ENCODE measurements at regions of chr3 and their contacts with region 1.

Region 1: DNA sequence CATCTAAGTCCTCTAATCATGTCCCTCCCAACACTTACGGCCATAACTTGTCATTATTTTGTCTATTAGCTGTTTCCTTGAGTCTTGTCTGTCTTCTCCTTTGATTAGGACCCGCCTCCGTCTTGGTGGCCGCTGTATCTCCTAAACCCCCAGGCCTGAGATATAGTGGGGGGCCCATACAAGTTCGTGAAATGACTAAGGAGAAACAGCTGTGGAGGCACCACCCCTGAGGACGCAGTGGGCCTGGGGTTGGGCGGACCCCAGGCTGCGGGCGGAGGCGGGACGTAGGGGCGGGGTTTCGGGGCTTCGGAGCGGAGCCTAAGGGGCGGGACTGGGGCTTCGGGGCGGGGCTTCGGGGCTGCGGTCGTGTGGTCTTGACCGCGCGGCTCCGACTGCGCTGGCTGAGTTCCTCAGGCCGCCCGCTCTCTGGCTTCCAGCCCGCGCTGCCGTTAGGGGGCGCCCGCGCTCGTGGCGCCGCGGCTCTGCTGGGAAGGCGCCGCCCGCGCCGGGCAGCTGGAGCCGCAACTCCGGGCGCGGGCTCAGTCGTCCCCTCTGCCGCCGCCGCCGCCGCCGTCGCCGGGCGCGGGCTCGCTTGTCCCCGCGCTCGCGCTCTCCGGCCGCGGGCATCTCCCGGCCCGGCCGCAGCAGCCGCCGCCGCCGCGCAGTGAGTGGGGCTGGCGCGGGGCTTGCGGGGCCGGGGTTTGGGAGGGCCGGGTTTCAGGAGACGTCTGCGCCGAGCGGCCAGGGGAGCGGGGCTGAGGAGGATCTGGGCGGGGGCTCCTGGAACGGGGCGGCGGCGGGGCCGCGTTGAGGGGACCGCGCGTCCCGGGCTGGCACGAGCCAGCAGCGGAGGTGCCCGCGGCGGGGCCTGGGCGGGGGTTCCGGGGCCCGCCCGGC is at the start of gene KCTD6:
- DNase-seq: peak; percentile 62
- H3K4me3 ChIP-seq: peak within 1 kb of the TSS; percentile 78
- H3K27me3 ChIP-seq: no peaks in the 10 kb centered on the region; the same call in 1 of the 2 replicates
- CTCF ChIP-seq: peak; percentile 56
- polyA plus RNA-seq, gene KCTD6: 5.1 and 9.4 TPM in 2 replicates

Region 2: GRCh38 chr3:56590814-56591213 is 1900.9 kb before region 1 on chr3:
- CTCF ChIA-PET with region 1: no interaction called
- POLR2A ChIA-PET with region 1: no interaction called
- DNase-seq: no peak
- H3K4me3 ChIP-seq: no peak overlapping the region
- H3K27me3 ChIP-seq: no peaks in the 10 kb centered on the region
- CTCF ChIP-seq: no peak

Region 3: DNA sequence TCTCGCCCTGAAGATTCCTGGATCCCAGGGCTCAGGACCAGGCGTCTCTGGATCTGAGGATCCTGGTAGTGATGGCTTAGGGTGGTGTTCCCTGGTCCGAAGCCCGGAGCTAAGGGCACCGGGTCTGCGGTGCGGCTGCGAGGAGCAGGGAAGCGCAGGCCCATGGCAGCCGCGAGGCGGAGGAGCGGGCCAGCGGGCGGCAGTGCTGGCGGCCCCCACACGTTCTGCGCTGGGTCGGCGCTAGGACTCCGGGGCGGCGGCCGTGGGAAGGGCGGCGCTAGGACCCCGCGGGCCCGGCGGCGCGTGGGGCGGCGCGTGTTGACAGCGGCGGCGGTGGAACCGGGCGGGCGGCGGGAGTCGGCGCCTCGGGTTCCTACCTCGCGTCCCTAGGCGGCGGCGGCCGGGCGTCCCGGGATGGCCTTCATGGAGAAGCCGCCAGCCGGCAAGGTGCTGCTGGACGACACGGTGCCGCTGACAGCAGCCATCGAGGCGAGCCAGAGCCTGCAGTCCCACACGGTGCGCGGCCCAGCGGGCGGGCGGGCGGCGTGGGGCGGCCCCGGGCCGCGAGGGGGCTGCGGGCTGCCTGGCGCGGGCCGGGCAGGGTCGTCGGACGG is 159.1 kb before region 1 on chr3 and contains the start of gene PXK:
- CTCF ChIA-PET with region 1: interaction called, 14 read pairs
- POLR2A ChIA-PET with region 1: interaction called, 3 read pairs
- DNase-seq: no peak
- H3K4me3 ChIP-seq: peak within 1 kb of the TSS; percentile 77
- H3K27me3 ChIP-seq: no peaks in the 10 kb centered on the region
- CTCF ChIP-seq: peak; percentile 3; the same call in 1 of the 2 replicates
- polyA plus RNA-seq, gene PXK: 36.4 and 38.9 TPM in 2 replicates

Region 4: DNA sequence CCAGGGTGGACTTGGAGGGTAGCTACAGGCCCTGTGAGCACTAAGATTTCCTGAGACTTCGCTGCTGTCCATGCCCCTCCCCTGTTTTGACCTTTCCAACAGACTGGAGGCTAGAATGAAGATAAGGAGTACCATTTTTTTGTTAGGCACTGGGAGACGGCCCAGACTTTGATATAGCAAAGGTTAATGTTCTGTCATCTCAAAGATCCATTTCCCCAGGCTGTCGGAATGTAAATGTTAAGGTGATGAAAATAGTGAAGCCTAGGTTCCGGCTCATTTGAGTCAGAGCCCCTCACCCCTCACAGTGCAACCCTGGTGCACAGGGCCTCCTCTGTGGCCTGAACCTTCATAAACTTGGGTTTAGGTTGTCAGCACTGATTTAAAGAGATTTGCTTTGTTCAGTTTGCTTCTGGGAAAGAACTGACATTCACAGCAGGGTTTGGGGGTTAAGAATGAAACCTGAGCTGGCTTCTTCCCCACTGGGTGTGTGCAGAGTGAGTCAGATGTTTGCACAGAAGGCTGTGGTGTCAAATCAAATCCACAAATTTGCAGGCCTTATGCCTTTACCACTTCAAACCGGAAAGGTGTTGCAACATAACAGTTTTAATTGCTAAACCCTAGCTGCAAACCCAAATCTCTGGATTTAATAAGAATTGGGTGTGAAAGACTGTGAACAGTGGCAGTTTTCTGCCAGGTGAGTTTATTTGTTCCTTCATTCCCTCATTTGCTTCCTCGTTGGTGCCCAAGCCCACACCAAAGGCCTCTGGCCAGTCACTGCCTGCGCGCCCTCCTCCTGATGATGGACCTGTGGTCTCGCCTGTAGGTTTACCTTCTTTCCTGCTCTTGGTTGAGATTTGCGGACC is 20.5 kb before region 1 on chr3:
- CTCF ChIA-PET with region 1: interaction called, 12 read pairs
- POLR2A ChIA-PET with region 1: no interaction called
- DNase-seq: peak; percentile 40
- H3K4me3 ChIP-seq: no peak overlapping the region
- H3K27me3 ChIP-seq: no peaks in the 10 kb centered on the region
- CTCF ChIP-seq: no peak

Region 5: GRCh38 chr3:58532794-58533220 is 41.1 kb after region 1 on chr3:
- CTCF ChIA-PET with region 1: interaction called, 14 read pairs
- POLR2A ChIA-PET with region 1: no interaction called
- DNase-seq: no peak
- H3K4me3 ChIP-seq: no peak overlapping the region
- H3K27me3 ChIP-seq: no peaks in the 10 kb centered on the region
- CTCF ChIP-seq: peak; percentile 96

Region 6: DNA sequence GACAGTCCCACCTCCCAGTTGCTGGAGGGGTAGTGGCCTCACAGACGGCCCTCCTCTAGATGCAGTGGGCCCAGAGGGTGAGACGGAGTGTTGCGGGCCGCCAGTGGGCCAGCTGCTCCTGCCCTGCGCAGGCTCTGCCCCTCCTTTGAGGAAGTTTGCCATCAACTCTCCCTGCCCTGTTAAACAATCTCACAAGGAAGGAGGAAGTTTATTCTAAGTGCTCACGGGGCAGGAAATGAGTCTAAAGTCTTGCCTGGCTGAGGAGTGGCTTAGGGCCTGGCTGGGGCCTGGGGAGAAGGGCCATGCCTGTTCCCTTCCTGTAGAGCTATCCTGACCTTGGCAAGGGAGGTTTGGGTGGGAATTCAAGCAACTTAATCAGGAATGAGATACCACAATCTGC is 174.9 kb after region 1 on chr3 and contains the start of gene FAM3D:
- CTCF ChIA-PET with region 1: no interaction called
- POLR2A ChIA-PET with region 1: no interaction called
- DNase-seq: no peak
- H3K4me3 ChIP-seq: no peak within 1 kb of the TSS
- H3K27me3 ChIP-seq: 0 out of 2 replicates have a peak, but pooled peaks cover 3% of the 10 kb centered on the region
- CTCF ChIP-seq: no peak
- polyA plus RNA-seq, gene FAM3D: not detected in 2 replicates

Region 7: GRCh38 chr3:58857402-58857801 is 365.6 kb after region 1 on chr3:
- CTCF ChIA-PET with region 1: no interaction called
- POLR2A ChIA-PET with region 1: no interaction called
- DNase-seq: no peak
- H3K4me3 ChIP-seq: no peak overlapping the region
- H3K27me3 ChIP-seq: no peaks in the 10 kb centered on the region
- CTCF ChIP-seq: no peak

Measured in BJ (cell line).